ENCODE measurements at regions of chr2 and their contacts with region 1.

Region 1: DNA sequence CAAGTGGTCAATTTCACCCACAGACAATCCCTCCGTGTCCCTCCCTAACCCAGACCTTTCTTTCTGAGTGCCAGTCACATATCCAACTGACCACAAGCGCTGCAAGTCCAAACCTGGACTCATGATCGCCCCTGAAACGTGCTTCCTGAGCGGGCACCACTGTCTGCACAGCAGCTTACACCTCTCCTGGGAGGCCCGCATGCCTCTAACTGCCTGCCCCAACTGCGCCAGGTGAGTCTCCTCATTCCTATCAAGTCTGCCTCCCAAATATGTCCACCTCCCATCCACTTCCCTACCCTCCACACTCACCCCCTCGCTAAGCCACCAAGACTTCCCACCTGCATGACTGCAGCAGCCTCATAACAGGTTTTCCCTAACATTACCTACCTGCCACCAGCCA is 33.4 kb downstream of the COL4A4 start:
- DNase-seq: no peak
- H3K4me3 ChIP-seq: no peak overlapping the region
- H3K27ac ChIP-seq: no peak overlapping the region
- H3K4me1 ChIP-seq: peaks cover 0 to 4% (median 1%) of the 10 kb centered on the region in 4 donors
- H3K27me3 ChIP-seq: peaks cover 0 to 17% (median 0%) of the 10 kb centered on the region in 4 donors
- CTCF ChIP-seq: no peak
- EP300 ChIP-seq: no peak
- POLR2A ChIP-seq: no peak

Region 2: GRCh38 chr2:227238238-227239237 is 107.9 kb after region 1 on chr2:
- intact Hi-C with region 1: loop called (anchors 1 kb)
- DNase-seq: no peak
- H3K4me3 ChIP-seq: no peak overlapping the region
- H3K27ac ChIP-seq: no peak overlapping the region
- H3K4me1 ChIP-seq: peaks cover 0 to 3% (median 0%) of the 10 kb centered on the region in 4 donors
- H3K27me3 ChIP-seq: peaks cover 0 to 10% (median 0%) of the 10 kb centered on the region in 4 donors
- CTCF ChIP-seq: peak; percentile 81 to 93 (median 91)
- EP300 ChIP-seq: no peak
- POLR2A ChIP-seq: no peak

Region 3: GRCh38 chr2:227374158-227374557 is 243.5 kb after region 1 on chr2:
- intact Hi-C with region 1: no loop called
- DNase-seq: no peak
- H3K4me3 ChIP-seq: no peak overlapping the region
- H3K27ac ChIP-seq: no peak overlapping the region
- H3K4me1 ChIP-seq: no peaks in the 10 kb centered on the region
- H3K27me3 ChIP-seq: no peaks in the 10 kb centered on the region
- CTCF ChIP-seq: no peak
- EP300 ChIP-seq: no peak
- POLR2A ChIP-seq: no peak

Measured in esophagus muscularis mucosa (tissue), 4 donors.